GM12878 (cell line): ENCODE measurements at regions of chr14 and their contacts with region 1.

Region 1: DNA sequence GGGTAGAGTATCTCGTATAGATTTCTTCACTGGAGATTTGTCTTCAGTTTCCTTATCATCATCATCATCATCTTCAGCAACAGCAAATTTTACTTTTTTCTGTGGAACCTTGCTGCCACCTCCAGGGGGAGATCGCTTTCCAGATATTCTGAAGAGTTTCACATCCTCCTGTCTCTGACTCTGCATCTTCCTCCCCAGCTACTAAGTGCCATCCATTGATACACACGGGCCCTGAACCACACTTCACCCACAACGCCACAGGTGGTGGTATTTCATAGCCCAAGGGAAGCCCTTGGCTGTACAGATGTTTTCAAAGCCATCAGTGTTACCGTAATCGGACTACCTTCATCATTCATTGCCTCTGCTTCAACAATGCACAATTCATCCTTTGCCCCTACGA is 82.2 kb downstream of the PPP2R5C start:
- DNase-seq: peak; percentile 69
- ATAC-seq: peak; percentile 87
- H3K4me3 ChIP-seq: no peak overlapping the region
- H3K27ac ChIP-seq: peak overlapping the region; percentile 61
- H3K4me1 ChIP-seq: peaks cover 44% of the 10 kb centered on the region
- H3K27me3 ChIP-seq: no peaks in the 10 kb centered on the region
- CTCF ChIP-seq: peak; percentile 65 to 80 (median 68); a peak in 5 of 6 replicates
- EP300 ChIP-seq: no peak
- POLR2A ChIP-seq: no peak
- RAD21 ChIP-seq: peak; percentile 78

Region 2: DNA sequence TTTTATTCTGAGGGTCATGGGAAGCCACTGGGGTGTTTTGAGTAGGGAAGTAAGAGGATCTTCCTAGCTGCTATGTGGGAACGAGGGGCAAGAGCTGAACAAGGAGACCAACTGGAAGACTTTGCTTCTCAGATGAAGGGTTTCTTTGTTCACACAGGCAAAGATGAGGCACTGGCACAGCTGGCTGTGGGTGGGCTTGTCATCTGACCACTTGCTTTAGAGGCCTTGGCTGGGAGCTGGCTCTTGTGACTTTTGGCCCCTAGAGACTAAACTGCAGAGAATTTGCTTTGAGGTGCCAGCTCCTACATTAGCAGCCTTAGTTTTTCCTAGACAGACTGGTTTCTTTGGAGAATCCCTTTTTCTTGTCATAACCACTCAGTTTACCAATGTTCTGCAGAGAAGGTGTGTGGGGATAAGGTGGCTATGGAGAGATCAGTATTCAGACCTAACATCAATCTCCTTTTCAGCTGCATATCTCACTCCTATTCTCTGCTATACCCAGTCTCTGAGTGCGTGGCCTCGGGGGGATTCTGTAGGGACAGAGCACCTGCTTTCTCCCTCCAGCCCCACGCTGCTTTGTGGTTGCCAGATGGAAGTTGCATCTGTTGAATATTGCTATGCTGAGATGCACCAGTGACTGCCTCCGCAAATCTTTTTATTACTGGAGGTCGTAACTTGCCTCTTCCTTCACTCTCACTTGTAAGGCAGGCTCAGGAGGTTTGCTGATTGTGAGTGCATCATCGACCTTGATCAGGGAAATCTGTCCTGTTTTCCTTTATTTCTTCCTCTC is 69.5 kb before region 1 on chr14:
- CTCF ChIA-PET with region 1: interaction called, 72 read pairs
- POLR2A ChIA-PET with region 1: interaction called, 4 read pairs
- RAD21 ChIA-PET with region 1: interaction called, 52 read pairs
- SMC1A ChIA-PET with region 1: interaction called, 34 read pairs
- in situ Hi-C with region 1: no loop called
- intact Hi-C with region 1: loop called (anchors 1 kb)
- DNase-seq: no peak
- ATAC-seq: no peak; the same call in 2 of the 3 replicates
- H3K4me3 ChIP-seq: no peak overlapping the region
- H3K27ac ChIP-seq: no peak overlapping the region
- H3K4me1 ChIP-seq: peaks cover 19% of the 10 kb centered on the region
- H3K27me3 ChIP-seq: no peaks in the 10 kb centered on the region
- CTCF ChIP-seq: no peak
- EP300 ChIP-seq: no peak
- POLR2A ChIP-seq: no peak
- RAD21 ChIP-seq: no peak

Region 3: DNA sequence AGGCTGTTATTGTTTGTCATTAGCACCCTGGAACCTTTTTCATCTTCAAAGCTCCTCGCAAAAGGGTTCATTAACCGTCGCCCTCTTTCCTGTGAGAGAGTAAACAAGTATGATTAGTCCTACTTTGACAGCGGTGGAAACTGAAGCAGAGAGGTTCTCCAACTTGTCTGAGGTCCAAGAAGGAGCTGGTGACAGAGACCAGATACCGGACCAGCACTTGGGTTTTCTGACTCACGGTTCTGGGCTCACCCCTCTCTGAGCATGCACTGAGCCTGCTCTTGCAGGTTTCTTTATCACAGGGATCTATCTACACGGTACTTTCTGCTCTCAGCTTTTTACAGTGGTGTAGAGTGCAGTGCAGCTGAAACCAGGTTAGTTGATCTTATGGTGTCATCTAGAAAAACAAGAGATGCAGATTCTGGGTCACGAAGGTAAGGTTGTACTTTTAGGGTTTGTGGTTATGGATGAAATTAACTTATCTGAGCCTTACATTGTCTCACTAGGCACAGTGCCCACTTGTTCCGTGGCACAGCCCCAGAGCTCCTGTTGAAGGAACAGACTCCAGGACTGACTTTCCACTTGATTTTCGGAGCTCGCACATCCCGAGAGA is 20.0 kb before region 1 on chr14:
- CTCF ChIA-PET with region 1: interaction called, 22 read pairs
- POLR2A ChIA-PET with region 1: interaction called, 8 read pairs
- RAD21 ChIA-PET with region 1: interaction called, 13 read pairs
- SMC1A ChIA-PET with region 1: interaction called, 8 read pairs
- in situ Hi-C with region 1: no loop called
- intact Hi-C with region 1: no loop called
- DNase-seq: peak; percentile 68
- ATAC-seq: peak; percentile 77
- H3K4me3 ChIP-seq: peak overlapping the region; percentile 67
- H3K27ac ChIP-seq: peak overlapping the region; percentile 99
- H3K4me1 ChIP-seq: peaks cover 63% of the 10 kb centered on the region
- H3K27me3 ChIP-seq: no peaks in the 10 kb centered on the region
- CTCF ChIP-seq: no peak
- EP300 ChIP-seq: 0 out of 4 replicates have a peak, but pooled peaks of 1 of the 2 experiments have one; percentile 32
- POLR2A ChIP-seq: no peak; the same call in 1 of the 2 replicates
- RAD21 ChIP-seq: no peak

Region 4: DNA sequence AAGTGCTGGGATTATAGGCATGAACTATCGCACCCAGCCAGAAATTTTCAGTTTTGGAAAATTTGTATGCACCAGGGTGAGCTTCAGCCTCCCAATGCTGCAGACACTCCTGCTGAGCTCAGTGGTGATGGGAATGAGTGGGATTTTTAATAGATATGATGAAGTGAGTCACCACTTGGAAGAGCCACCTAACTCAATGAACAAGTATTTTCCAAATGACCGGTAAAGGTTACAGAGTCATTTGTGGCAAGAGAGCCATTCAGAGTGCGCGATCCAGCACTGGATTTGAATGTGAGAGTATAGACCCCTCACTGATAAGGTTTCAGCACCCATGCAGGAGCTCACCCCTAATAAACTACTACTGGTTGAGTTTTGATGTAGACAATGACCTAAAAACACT is 18.5 kb after region 1 on chr14:
- CTCF ChIA-PET with region 1: interaction called, 6 read pairs
- POLR2A ChIA-PET with region 1: interaction called, 4 read pairs
- RAD21 ChIA-PET with region 1: interaction called, 7 read pairs
- SMC1A ChIA-PET with region 1: interaction called, 13 read pairs
- in situ Hi-C with region 1: no loop called
- intact Hi-C with region 1: no loop called
- DNase-seq: no peak
- ATAC-seq: no peak
- H3K4me3 ChIP-seq: no peak overlapping the region
- H3K27ac ChIP-seq: no peak overlapping the region
- H3K4me1 ChIP-seq: peaks cover 10% of the 10 kb centered on the region
- H3K27me3 ChIP-seq: no peaks in the 10 kb centered on the region
- CTCF ChIP-seq: no peak
- EP300 ChIP-seq: no peak
- POLR2A ChIP-seq: no peak
- RAD21 ChIP-seq: no peak

Region 5: DNA sequence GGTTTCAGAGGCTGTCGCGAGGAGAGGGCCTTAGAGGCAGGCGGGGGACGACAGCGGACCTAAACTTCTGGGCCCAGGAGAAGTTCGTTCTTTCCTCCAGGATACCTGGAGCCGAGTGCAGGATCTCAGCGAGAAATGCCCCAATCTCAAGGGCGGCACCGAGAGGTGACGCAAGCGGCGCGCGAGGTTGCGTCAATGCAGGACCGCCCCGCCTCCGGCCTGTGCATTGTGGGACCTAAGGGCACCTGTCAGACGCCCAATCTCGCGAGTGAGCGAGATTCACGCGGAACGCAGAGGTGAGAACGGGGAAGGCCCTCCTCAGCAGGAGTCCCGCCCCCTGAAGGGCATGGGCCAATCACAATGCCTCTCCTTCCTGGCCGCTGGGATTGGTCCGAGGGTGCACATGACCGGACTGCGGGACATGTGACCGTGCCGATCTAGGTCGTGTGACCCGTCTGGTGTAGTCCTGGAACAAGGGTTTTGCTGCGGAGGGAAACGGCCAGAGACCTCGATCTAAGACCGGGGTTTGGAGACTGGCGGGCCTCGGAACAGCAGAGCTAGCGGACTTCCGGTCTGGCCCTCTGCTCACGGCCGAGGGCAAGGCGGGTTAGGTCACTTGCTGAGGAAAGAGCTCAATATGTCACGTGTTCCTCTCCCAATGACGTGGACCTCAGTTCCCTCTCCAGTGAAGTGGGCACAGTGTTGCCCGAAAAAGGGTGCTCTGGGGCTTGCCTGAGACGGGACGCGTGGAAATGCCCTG is 104.4 kb after region 1 on chr14:
- CTCF ChIA-PET with region 1: interaction called, 8 read pairs
- POLR2A ChIA-PET with region 1: interaction called, 7 read pairs
- RAD21 ChIA-PET with region 1: interaction called, 3 read pairs
- SMC1A ChIA-PET with region 1: interaction called, 6 read pairs
- in situ Hi-C with region 1: no loop called
- intact Hi-C with region 1: loop called (anchors 10 kb)
- DNase-seq: peak; percentile 100
- ATAC-seq: peak; percentile 99
- H3K4me3 ChIP-seq: peak overlapping the region; percentile 99
- H3K27ac ChIP-seq: peak overlapping the region; percentile 83
- H3K4me1 ChIP-seq: peaks cover 2% of the 10 kb centered on the region; the same call in 1 of the 2 replicates
- H3K27me3 ChIP-seq: no peaks in the 10 kb centered on the region
- CTCF ChIP-seq: no peak; a peak in 1 of 6 replicates
- EP300 ChIP-seq: 0 out of 4 replicates have a peak, but pooled peaks of 1 of the 2 experiments have one; percentile 32
- POLR2A ChIP-seq: peak; percentile 91
- RAD21 ChIP-seq: no peak